Activated B cell treated with CpG ODN at 0.5 μM for 24 hours (primary cell): ENCODE measurements at regions of chr15 and their contacts with region 1.

Region 1: GRCh38 chr15:67120839-67121643 is 55.6 kb downstream of the SMAD3 start:
- DNase-seq: peak; percentile 86
- ATAC-seq: peak; percentile 86
- H3K4me3 Mint-ChIP-seq: peak overlapping the region; percentile 74
- H3K27ac Mint-ChIP-seq: peak overlapping the region; percentile 94
- H3K4me1 Mint-ChIP-seq: peaks cover 97% of the 10 kb centered on the region
- H3K27me3 Mint-ChIP-seq: no peaks in the 10 kb centered on the region
- CTCF ChIP-seq: no peak

Region 2: DNA sequence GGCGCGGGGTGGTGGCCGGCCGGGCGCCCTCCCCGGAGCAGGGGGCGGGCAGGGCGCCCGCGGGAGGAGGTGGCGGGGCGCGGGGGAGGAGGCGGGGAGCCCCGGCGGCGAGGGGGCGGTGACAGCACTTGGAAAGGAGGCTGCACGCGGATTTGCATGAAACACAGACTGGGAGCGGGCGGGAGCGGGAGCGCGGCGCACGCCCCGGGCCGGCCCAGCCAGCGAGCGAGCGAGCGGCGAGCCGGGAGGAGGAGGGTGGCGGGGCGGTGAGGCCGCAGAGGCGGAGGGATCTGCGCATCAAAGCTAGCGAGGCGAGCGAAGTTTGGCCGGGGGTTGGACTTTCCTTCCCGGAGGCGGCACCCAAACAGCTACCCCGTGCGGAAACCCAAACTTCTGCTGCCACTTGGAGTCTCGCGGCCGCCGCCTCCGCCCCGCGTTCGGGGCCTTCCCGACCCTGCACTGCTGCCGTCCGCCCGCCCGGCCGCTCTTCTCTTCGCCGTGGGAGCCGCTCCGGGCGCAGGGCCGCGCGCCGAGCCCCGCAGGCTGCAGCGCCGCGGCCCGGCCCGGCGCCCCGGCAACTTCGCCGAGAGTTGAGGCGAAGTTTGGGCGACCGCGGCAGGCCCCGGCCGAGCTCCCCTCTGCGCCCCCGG is 55.5 kb before region 1 on chr15 and contains the start of gene SMAD3:
- CTCF ChIA-PET with region 1: interaction called, 6 read pairs
- POLR2A ChIA-PET with region 1: interaction called, 1,703 read pairs
- intact Hi-C with region 1: loop called (anchors 1 kb)
- DNase-seq: peak; percentile 74
- ATAC-seq: peak; percentile 71
- H3K4me3 Mint-ChIP-seq: peak within 1 kb of the TSS; percentile 98
- H3K27ac Mint-ChIP-seq: peak within 1 kb of the TSS; percentile 95
- H3K4me1 Mint-ChIP-seq: peaks cover 47% of the 10 kb centered on the region
- H3K27me3 Mint-ChIP-seq: no peaks in the 10 kb centered on the region
- CTCF ChIP-seq: no peak
- total RNA-seq, gene SMAD3: 85.9 and 118 TPM in 2 replicates

Region 3: GRCh38 chr15:67091071-67091979 is 29.7 kb before region 1 on chr15:
- CTCF ChIA-PET with region 1: interaction called, 4 read pairs
- POLR2A ChIA-PET with region 1: interaction called, 1,703 read pairs
- intact Hi-C with region 1: loop called (anchors 1 kb)
- DNase-seq: no peak
- ATAC-seq: peak; percentile 46
- H3K4me3 Mint-ChIP-seq: peak overlapping the region; percentile 74
- H3K27ac Mint-ChIP-seq: peak overlapping the region; percentile 95
- H3K4me1 Mint-ChIP-seq: peaks cover 100% of the 10 kb centered on the region
- H3K27me3 Mint-ChIP-seq: no peaks in the 10 kb centered on the region
- CTCF ChIP-seq: no peak

Region 4: DNA sequence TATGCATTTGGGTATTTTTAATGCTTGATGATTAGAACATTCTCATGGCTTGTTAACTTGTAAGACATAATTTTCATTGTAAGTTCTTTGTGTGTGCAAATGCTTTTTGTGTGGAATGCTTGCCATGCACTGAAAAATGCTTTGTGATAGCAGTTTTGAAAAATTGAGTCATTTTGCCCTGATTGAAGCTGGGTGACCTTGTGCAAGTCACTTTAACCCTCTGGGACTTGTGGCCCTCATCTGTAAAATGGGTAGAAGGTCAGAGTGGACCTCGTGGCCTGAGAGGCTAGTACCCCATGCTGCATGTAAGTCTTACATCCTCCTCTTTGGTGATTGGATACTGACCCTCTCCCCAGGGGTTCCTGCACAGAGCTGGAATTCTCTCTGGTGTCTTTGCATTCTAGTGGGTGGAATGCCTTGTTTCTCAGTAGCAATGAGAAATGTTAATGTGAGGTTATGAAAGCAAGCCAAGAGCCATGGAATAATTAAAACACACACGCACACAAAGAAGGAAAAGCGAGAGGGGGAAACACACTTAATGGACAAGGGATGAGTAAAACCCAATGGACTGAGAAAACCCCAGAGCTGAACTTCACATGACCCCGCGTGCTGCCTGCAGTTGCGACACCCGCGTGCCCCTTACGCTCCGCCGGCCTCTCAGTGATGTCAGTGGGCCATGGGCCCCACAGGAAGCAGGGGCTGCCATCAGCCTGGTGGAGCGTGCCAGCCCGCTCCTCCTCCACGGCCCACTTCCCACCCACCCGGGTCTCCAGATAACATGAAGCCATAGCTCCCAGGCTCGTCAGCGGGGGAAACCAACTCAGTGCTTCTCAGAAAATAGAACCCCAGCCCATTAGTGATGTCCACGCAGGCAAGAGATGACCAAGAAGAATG is 11.7 kb before region 1 on chr15:
- CTCF ChIA-PET with region 1: no interaction called
- POLR2A ChIA-PET with region 1: interaction called, 147 read pairs
- intact Hi-C with region 1: loop called (anchors 1 kb)
- DNase-seq: peak; percentile 76
- ATAC-seq: peak; percentile 83
- H3K4me3 Mint-ChIP-seq: peak overlapping the region; percentile 67
- H3K27ac Mint-ChIP-seq: peak overlapping the region; percentile 92
- H3K4me1 Mint-ChIP-seq: peaks cover 14% of the 10 kb centered on the region
- H3K27me3 Mint-ChIP-seq: no peaks in the 10 kb centered on the region
- CTCF ChIP-seq: no peak

Region 5: GRCh38 chr15:67157531-67158252 is 36.7 kb after region 1 on chr15:
- CTCF ChIA-PET with region 1: no interaction called
- POLR2A ChIA-PET with region 1: interaction called, 5 read pairs
- intact Hi-C with region 1: loop called (anchors 5 kb)
- DNase-seq: no peak
- ATAC-seq: no peak
- H3K4me3 Mint-ChIP-seq: no peak overlapping the region
- H3K27ac Mint-ChIP-seq: no peak overlapping the region
- H3K4me1 Mint-ChIP-seq: peaks cover 84% of the 10 kb centered on the region
- H3K27me3 Mint-ChIP-seq: no peaks in the 10 kb centered on the region
- CTCF ChIP-seq: no peak